ENCODE measurements at regions of chr12 and their contacts with region 1.

Region 1: GRCh38 chr12:116055895-116056607 is 221.4 kb downstream of the MED13L start:
- DNase-seq: no peak
- H3K4me3 ChIP-seq: no peak overlapping the region
- CTCF ChIP-seq: no peak

Region 2: GRCh38 chr12:116066381-116067230 is 10.6 kb after region 1 on chr12:
- CTCF ChIA-PET with region 1: interaction called, 24 read pairs
- POLR2A ChIA-PET with region 1: no interaction called
- DNase-seq: no peak
- H3K4me3 ChIP-seq: no peak overlapping the region
- CTCF ChIP-seq: peak; percentile 66

Measured in AG04449 (cell line).